Naive thymus-derived CD4-positive, alpha-beta T cell (primary cell): ENCODE measurements at regions of chr22 and their contacts with region 1.

Region 1: DNA sequence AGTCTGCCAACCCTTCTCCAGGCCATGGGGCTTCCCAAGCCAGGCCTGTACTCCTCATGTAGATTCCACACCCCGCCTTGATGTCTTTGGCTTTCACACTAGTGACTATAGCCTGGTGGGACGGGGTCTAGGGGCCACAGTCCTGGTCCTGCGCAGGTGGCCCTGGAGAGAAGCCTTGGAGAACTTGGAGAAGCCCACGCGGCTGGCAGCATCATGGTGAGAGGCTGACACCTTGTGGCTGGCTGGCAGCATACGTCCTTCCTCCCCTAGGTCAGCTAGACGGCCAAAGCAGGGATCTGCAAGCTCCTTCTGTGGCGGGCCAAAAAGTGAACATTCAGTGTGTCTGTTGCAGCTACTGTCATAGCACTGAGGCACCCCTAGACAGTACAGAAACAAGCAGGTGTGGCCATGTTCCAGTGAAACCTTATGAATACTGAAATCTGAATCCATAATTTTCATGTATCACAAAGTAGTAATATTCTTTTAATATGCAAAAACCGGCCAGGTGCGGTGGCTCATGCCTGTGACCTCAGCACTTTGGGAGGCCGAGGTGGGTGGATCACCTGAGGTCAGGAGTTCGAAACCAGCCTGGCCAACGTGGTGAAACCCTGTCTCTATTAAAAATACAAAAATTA is 42.0 kb downstream of the FAM83F start:
- DNase-seq: peak in 7 of 9 donors; percentile 26 to 56 (median 48)
- ATAC-seq: peak; percentile 81
- H3K4me3 ChIP-seq: no peak overlapping the region
- H3K4me3 Mint-ChIP-seq: no peak overlapping the region
- H3K27ac ChIP-seq: no peak overlapping the region
- H3K27ac Mint-ChIP-seq: no peak overlapping the region
- H3K4me1 ChIP-seq: no peaks in the 10 kb centered on the region
- H3K4me1 Mint-ChIP-seq: peaks cover 0 to 7% (median 6%) of the 10 kb centered on the region in 7 donors
- H3K27me3 ChIP-seq: peaks cover 0 to 3% of the 10 kb centered on the region in 2 donors
- H3K27me3 Mint-ChIP-seq: peaks cover 3 to 25% (median 15%) of the 10 kb centered on the region in 5 donors

Region 2: DNA sequence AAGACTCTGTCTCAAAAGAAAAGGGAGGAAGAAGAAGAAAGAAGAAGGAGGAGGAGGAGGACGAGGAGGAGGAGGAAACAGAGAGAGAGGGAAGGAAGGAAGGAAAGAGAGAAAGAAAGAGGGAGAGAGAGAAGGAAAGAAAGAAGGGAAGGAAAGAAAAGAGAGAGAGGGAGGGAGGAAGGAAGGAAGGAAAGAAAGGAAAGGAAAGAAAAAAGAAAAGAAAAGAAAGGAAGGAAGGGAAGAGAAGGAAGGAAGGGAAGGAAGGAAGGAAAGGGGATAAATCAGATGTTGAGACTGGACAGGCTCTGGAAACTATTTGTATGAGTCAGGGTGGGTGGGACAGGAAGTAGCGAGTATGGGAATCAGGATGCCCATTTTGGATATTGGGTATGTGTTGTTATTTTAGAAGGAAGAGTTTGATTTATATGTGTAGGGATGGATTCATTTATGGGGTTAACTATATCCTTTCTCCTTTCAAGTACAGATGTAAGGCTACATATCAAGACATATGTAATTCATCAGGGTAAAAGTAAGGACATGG is 711.2 kb before region 1 on chr22:
- CTCF ChIA-PET with region 1: no interaction called
- POLR2A ChIA-PET with region 1: interaction called, 3 read pairs
- intact Hi-C with region 1: loop called in 1 of 2 experiments (anchors 5 kb)
- DNase-seq: no peak
- ATAC-seq: no peak
- H3K4me3 ChIP-seq: no peak overlapping the region
- H3K4me3 Mint-ChIP-seq: no peak overlapping the region
- H3K27ac ChIP-seq: no peak overlapping the region
- H3K27ac Mint-ChIP-seq: peak overlapping the region in 1 of 9 donors; percentile 11
- H3K4me1 ChIP-seq: no peaks in the 10 kb centered on the region
- H3K4me1 Mint-ChIP-seq: peaks cover 0 to 8% (median 0%) of the 10 kb centered on the region in 7 donors
- H3K27me3 ChIP-seq: no peaks in the 10 kb centered on the region
- H3K27me3 Mint-ChIP-seq: peaks cover 0 to 9% (median 0%) of the 10 kb centered on the region in 5 donors

Region 3: DNA sequence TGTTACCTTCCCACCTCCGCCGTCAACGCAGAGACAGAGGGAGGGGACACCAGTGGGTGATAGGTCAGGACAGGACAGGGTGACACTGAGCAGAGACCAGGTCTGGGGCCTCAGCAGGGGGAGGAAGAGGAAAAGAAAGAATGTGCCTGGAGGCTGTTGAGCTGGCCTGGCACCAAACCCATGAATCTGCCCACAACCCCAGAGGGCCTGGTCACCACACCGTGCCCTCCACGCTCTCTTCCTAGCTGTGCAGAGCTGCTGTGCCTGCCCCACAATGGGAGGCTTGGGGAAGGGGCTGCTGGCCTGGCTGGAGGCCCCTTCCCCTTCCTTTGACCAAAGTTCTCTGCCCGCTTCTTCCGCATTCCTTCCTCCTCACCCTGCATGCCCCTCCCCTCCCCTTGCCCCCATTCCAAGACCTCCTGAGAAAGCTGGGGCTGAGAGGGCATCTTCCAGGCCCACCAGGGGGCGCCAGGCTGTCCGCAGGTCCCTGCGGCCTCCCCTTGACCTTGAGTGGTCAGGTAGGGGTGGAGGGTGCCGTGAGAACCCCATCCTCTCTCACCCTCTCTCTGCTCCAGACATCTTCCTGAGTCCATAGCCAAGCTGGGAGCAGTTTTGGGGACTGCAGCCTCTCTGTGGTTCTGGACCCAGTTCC is 477.1 kb before region 1 on chr22:
- CTCF ChIA-PET with region 1: no interaction called
- POLR2A ChIA-PET with region 1: interaction called, 4 read pairs
- intact Hi-C with region 1: loop called in 1 of 2 experiments (anchors 2 kb)
- DNase-seq: no peak
- ATAC-seq: no peak
- H3K4me3 ChIP-seq: no peak overlapping the region
- H3K4me3 Mint-ChIP-seq: peak overlapping the region in 1 of 10 donors; percentile 77
- H3K27ac ChIP-seq: no peak overlapping the region
- H3K27ac Mint-ChIP-seq: no peak overlapping the region
- H3K4me1 ChIP-seq: no peaks in the 10 kb centered on the region
- H3K4me1 Mint-ChIP-seq: peaks cover 5 to 15% (median 6%) of the 10 kb centered on the region in 7 donors
- H3K27me3 ChIP-seq: peaks cover 0 to 8% of the 10 kb centered on the region in 2 donors
- H3K27me3 Mint-ChIP-seq: peaks cover 15 to 44% (median 19%) of the 10 kb centered on the region in 5 donors